ENCODE measurements at regions of chr4 and their contacts with region 1.

Region 1: DNA sequence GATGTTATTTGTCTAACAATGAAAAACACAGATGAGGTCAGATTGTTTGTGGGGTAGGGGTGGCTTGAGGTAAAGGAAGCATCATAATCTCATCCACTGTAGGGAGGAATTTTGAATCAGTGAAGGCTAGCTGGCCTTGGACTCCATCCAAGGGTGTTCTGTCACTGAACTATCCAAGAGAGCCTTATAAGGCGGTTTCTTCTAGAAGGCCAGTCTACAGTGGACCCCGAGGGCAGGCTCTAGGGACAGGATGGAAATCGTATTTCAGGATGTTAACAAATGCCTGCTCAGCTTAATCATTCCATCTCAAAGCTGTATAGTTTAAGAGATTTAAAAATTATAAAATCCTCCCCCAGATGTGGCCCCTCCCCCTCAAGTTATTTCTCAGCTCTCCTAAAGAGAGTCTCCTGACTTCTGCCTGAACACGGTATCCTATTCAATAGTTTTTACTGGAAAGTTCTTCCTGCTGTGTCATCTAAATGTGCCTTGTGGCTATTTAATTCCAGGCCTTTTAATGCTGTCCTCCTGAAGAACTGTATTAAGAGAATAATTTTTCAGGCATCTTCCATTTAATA is 8.0 kb downstream of the IGFBP7 start:
- DNase-seq: peak; percentile 88
- ATAC-seq: peak; percentile 67
- H3K4me3 ChIP-seq: no peak overlapping the region
- H3K27ac ChIP-seq: peak overlapping the region; percentile 4; the same call in 1 of the 2 replicates
- H3K4me1 ChIP-seq: peaks cover 35% of the 10 kb centered on the region
- H3K27me3 ChIP-seq: no peaks in the 10 kb centered on the region
- CTCF ChIP-seq: no peak
- POLR2A ChIP-seq: no peak
- RAD21 ChIP-seq: no peak

Region 2: GRCh38 chr4:56977321-56978012 is 124.7 kb before region 1 on chr4 and contains the start of gene NOA1:
- CTCF ChIA-PET with region 1: no interaction called
- POLR2A ChIA-PET with region 1: no interaction called
- dilution Hi-C with region 1: no loop called
- in situ Hi-C with region 1: no loop called
- intact Hi-C with region 1: loop called (anchors 5 kb)
- DNase-seq: peak; percentile 99
- ATAC-seq: peak; percentile 71
- H3K4me3 ChIP-seq: peak within 1 kb of the TSS; percentile 86
- H3K27ac ChIP-seq: peak within 1 kb of the TSS; percentile 89
- H3K4me1 ChIP-seq: no peaks in the 10 kb centered on the region
- H3K27me3 ChIP-seq: no peaks in the 10 kb centered on the region
- CTCF ChIP-seq: no peak
- POLR2A ChIP-seq: peak; percentile 59; the same call in 1 of the 2 replicates
- RAD21 ChIP-seq: no peak
- total RNA-seq, gene NOA1: 9.7 and 10.4 TPM in 2 replicates

Region 3: DNA sequence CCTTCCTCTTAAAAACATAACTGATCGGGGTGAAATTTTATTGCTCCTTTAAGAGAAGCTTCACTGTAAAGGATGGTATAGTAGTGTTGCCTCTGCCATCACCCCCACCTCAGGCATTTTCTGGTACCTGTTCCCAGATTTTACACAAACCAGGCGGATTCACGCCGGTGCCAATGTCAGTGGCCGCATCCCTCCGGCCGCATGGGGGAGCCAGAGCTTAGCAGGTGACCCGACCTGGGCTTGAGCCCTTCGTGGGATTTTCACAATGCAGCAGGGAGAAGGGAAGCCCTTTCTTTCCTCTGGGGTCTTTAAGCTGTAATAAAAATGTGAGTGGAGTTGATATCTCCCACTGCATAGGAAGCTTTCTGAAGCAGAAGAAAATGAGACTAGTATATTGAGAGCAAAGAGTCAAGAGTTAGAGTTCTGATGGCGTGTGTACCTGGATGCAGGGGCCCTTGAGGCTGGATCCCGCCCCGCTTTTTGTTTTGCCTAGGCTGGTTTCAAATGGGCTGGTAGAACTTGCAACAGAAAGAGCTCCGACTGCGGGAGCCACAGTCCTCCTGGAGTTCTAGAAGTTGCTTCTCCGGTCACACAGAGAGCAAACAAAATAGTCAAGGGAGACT is 64.0 kb before region 1 on chr4:
- CTCF ChIA-PET with region 1: interaction called, 5 read pairs
- POLR2A ChIA-PET with region 1: no interaction called
- dilution Hi-C with region 1: no loop called
- in situ Hi-C with region 1: no loop called
- intact Hi-C with region 1: loop called (anchors 5 kb)
- DNase-seq: peak; percentile 55
- ATAC-seq: peak; percentile 73
- H3K4me3 ChIP-seq: no peak overlapping the region
- H3K27ac ChIP-seq: no peak overlapping the region
- H3K4me1 ChIP-seq: peaks cover 8% of the 10 kb centered on the region
- H3K27me3 ChIP-seq: no peaks in the 10 kb centered on the region
- CTCF ChIP-seq: peak; percentile 86
- POLR2A ChIP-seq: peak; percentile 22; the same call in 1 of the 2 replicates
- RAD21 ChIP-seq: peak; percentile 94

Region 4: DNA sequence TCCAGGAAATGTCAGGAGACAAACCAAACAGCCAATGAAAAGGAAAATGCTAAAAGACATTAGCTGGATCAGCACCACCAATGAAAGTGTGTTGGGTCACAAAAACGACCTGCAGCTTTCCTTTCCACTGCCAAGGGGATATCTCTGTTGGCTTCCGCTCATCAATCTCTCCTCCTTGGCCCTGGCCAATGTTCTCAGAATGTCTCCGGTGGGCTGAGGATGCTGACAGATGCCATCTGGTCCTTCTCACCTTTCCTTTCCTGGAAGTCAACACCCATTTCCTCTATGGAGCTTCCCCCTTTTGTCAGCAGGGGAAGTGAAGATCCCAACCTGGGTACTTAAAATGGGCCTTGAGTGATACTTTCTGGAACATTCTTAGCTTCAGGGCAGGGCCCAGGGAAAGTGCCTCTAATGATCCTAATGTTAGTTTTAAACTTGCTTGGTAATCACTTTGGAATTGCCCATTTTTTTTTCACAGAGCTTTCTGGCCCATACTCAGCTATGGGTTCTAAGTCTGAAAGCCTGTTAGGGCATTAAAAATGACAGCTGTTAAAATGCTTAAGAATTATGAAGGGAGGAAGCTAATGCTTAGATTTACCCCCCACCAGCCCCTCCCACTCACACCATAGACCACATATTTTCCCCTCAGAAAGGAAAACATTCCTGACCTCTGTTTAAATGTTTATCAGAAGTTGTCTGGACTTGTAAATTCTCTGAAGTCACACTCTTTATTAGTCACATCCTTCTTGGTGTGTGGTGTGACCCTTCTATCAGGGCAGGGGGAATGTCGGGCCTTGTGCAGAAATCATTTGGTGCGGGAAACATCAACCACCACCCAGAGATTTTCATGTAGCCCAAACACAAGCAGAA is 21.1 kb before region 1 on chr4:
- CTCF ChIA-PET with region 1: interaction called, 4 read pairs
- POLR2A ChIA-PET with region 1: interaction called, 3 read pairs
- dilution Hi-C with region 1: no loop called
- in situ Hi-C with region 1: no loop called
- intact Hi-C with region 1: loop called (anchors 2 kb)
- DNase-seq: peak; percentile 98
- ATAC-seq: peak; percentile 83
- H3K4me3 ChIP-seq: no peak overlapping the region
- H3K27ac ChIP-seq: peak overlapping the region; percentile 91
- H3K4me1 ChIP-seq: peaks cover 23% of the 10 kb centered on the region
- H3K27me3 ChIP-seq: no peaks in the 10 kb centered on the region
- CTCF ChIP-seq: no peak
- POLR2A ChIP-seq: no peak
- RAD21 ChIP-seq: 0 out of 2 replicates have a peak, but pooled peaks have one; percentile 25

Region 5: GRCh38 chr4:57154191-57154590 is 52.1 kb after region 1 on chr4:
- CTCF ChIA-PET with region 1: no interaction called
- POLR2A ChIA-PET with region 1: no interaction called
- dilution Hi-C with region 1: no loop called
- in situ Hi-C with region 1: no loop called
- intact Hi-C with region 1: no loop called
- DNase-seq: peak; percentile 23
- ATAC-seq: no peak
- H3K4me3 ChIP-seq: no peak overlapping the region
- H3K27ac ChIP-seq: no peak overlapping the region
- H3K4me1 ChIP-seq: peaks cover 3% of the 10 kb centered on the region
- H3K27me3 ChIP-seq: no peaks in the 10 kb centered on the region; the same call in 1 of the 2 replicates
- CTCF ChIP-seq: no peak
- POLR2A ChIP-seq: no peak
- RAD21 ChIP-seq: no peak

Region 6: DNA sequence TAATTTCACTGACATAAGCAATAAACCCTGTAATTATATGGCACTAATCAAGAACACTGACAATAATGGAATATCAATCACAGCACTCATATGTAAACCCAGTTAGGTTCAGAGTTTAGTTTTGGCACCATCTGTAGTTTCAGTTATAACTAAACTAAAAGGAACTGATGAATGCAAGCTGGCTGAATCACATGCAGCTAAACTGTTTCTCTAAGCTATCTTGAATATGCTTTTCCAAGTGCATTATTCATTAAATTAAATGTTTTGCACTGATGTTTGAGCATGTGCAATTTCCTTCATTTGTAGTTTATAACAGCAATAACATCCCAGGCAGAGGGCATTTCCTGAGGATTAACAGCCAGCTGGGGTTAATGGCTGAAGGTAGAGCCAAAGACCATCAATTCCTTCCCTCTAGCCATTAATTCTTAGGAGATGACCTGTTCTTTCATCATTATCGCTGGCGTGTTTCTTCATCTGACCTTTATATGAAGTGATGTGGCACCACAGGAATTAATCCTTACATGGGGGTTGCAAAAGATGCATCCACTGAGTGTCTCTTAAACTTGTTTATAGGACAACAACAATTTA is 570.8 kb after region 1 on chr4:
- CTCF ChIA-PET with region 1: no interaction called
- POLR2A ChIA-PET with region 1: no interaction called
- dilution Hi-C with region 1: no loop called
- in situ Hi-C with region 1: no loop called
- intact Hi-C with region 1: no loop called
- DNase-seq: no peak
- ATAC-seq: no peak
- H3K4me3 ChIP-seq: no peak overlapping the region
- H3K27ac ChIP-seq: no peak overlapping the region
- H3K4me1 ChIP-seq: no peaks in the 10 kb centered on the region
- H3K27me3 ChIP-seq: no peaks in the 10 kb centered on the region
- CTCF ChIP-seq: no peak
- POLR2A ChIP-seq: no peak
- RAD21 ChIP-seq: no peak

Region 7: GRCh38 chr4:59044286-59044900 is 1942.3 kb after region 1 on chr4:
- CTCF ChIA-PET with region 1: no interaction called
- POLR2A ChIA-PET with region 1: interaction called, 11 read pairs
- dilution Hi-C with region 1: no loop called
- in situ Hi-C with region 1: no loop called
- intact Hi-C with region 1: no loop called
- DNase-seq: no peak
- ATAC-seq: no peak
- H3K4me3 ChIP-seq: no peak overlapping the region
- H3K27ac ChIP-seq: no peak overlapping the region
- H3K4me1 ChIP-seq: no peaks in the 10 kb centered on the region
- H3K27me3 ChIP-seq: no peaks in the 10 kb centered on the region
- CTCF ChIP-seq: no peak
- POLR2A ChIP-seq: no peak
- RAD21 ChIP-seq: no peak

Measured in IMR-90 (cell line).